Dendritic cell treated with granulocyte-macrophage colony-stimulating factor and Interleukin-4, amounts not matched to agents 40 ng/mL and 50 ng/mL, for 4 days (primary cell): ENCODE measurements at regions of chr12 and their contacts with region 1.

Region 1: GRCh38 chr12:92111256-92111655 is 34.4 kb downstream of the BTG1 start:
- H3K4me3 Mint-ChIP-seq: no peak overlapping the region
- H3K27ac Mint-ChIP-seq: peak overlapping the region; percentile 50
- H3K4me1 Mint-ChIP-seq: peaks cover 43% of the 10 kb centered on the region
- H3K27me3 Mint-ChIP-seq: no peaks in the 10 kb centered on the region

Region 2: DNA sequence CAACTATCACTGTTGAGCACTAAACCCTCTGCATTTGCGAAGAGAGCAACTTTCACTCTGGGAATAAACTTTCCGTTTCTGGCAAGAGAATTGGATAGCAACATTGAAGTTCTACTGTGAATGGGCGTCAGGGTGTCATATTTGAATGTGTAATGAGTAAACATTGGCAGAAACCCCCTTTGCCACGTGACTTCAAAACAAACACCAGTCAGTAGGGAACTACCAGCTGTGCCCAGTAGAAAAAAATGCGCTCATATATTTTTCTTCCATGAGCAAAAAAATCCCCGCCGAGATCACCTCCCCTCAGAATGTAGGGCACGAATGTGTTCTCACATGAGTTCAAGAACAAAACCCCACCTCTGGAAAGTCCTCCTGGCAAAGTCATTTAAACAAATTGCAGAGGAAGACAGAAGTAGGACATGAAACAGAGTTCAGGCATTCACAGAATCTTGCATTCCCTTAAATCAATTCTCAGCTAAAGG is 46.2 kb before region 1 on chr12:
- intact Hi-C with region 1: loop called (anchors 10 kb)
- H3K4me3 Mint-ChIP-seq: no peak overlapping the region
- H3K27ac Mint-ChIP-seq: no peak overlapping the region
- H3K4me1 Mint-ChIP-seq: peaks cover 30% of the 10 kb centered on the region
- H3K27me3 Mint-ChIP-seq: no peaks in the 10 kb centered on the region